OCI-LY7 (cell line): ENCODE measurements at regions of chr16 and their contacts with region 1.

Region 1: GRCh38 chr16:31179747-31180459 is at the start of gene FUS:
- DNase-seq: peak; percentile 93
- H3K4me3 ChIP-seq: peak within 1 kb of the TSS; percentile 90
- H3K27ac ChIP-seq: peak within 1 kb of the TSS; percentile 81
- H3K4me1 ChIP-seq: peaks cover 44% of the 10 kb centered on the region
- CTCF ChIP-seq: no peak
- total RNA-seq, gene FUS: 90.0 and 104 TPM in 2 replicates

Region 2: DNA sequence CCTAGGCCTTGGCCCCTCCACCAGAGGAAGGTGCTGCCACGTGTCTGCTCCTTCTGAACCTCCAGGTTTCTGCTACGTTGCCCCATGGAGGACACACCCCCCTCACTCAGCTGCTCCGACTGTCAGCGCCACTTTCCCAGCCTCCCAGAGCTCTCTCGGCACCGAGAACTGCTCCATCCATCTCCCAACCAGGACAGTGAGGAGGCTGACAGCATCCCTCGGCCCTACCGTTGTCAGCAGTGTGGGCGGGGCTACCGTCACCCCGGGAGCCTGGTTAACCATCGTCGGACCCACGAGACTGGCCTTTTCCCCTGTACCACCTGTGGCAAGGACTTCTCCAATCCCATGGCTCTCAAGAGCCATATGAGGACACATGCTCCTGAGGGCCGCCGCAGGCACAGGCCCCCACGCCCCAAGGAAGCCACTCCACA is 103.6 kb before region 1 on chr16:
- CTCF ChIA-PET with region 1: no interaction called
- POLR2A ChIA-PET with region 1: no interaction called
- intact Hi-C with region 1: no loop called
- DNase-seq: no peak
- H3K4me3 ChIP-seq: no peak overlapping the region
- H3K27ac ChIP-seq: no peak overlapping the region
- H3K4me1 ChIP-seq: peaks cover 15% of the 10 kb centered on the region
- CTCF ChIP-seq: no peak

Region 3: GRCh38 chr16:31117391-31118197 is 62.3 kb before region 1 on chr16 and contains the start of gene KAT8:
- CTCF ChIA-PET with region 1: interaction called, 4 read pairs
- POLR2A ChIA-PET with region 1: interaction called, 4 read pairs
- intact Hi-C with region 1: loop called (anchors 1 kb)
- DNase-seq: peak; percentile 99
- H3K4me3 ChIP-seq: peak within 1 kb of the TSS; percentile 81
- H3K27ac ChIP-seq: peak within 1 kb of the TSS; percentile 65
- H3K4me1 ChIP-seq: peaks cover 8% of the 10 kb centered on the region
- CTCF ChIP-seq: no peak
- total RNA-seq, gene KAT8: 86.9 and 89.1 TPM in 2 replicates

Region 4: GRCh38 chr16:31202414-31203375 is 22.8 kb after region 1 on chr16 and contains the start of gene PYCARD:
- CTCF ChIA-PET with region 1: interaction called, 3 read pairs
- POLR2A ChIA-PET with region 1: interaction called, 10 read pairs
- intact Hi-C with region 1: no loop called
- DNase-seq: peak; percentile 37
- H3K4me3 ChIP-seq: peak within 1 kb of the TSS; percentile 69
- H3K27ac ChIP-seq: peak within 1 kb of the TSS; percentile 37
- H3K4me1 ChIP-seq: peaks cover 46% of the 10 kb centered on the region
- CTCF ChIP-seq: no peak
- total RNA-seq, gene PYCARD: 3.7 and 5.5 TPM in 2 replicates